ENCODE measurements at regions of chr5 and their contacts with region 1.

Region 1: GRCh38 chr5:91280362-91281269 is 102.5 kb downstream of the ARRDC3 start:
- DNase-seq: peak; percentile 95 to 97
- ATAC-seq: peak; percentile 97 to 99 (median 98)
- H3K4me3 ChIP-seq: peak overlapping the region; percentile 64
- H3K27ac ChIP-seq: peak overlapping the region; percentile 96
- H3K4me1 ChIP-seq: peaks cover 12% of the 10 kb centered on the region
- H3K27me3 ChIP-seq: no peaks in the 10 kb centered on the region
- CTCF ChIP-seq: no peak

Region 2: DNA sequence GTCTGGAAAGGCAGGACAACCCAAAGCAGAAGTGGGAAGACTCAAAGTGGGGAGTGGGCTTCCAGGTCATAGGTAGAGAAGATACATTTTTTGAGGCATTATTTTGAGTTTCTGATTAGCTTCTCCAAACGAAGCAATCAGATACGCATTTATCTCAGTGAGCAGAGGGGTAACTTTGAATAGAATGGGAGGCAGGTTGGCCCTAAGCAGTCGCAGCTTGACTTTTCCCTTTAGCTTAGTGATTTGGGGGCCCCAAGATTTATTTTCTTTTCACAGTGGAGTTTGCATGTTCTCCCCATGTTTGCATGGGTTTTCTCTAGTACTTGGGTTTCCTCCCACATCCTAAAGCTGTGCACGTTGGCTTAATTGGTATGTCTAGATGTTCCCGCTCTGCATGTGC is 299.4 kb before region 1 on chr5:
- intact Hi-C with region 1: no loop called
- DNase-seq: no peak
- ATAC-seq: no peak
- H3K4me3 ChIP-seq: no peak overlapping the region
- H3K27ac ChIP-seq: no peak overlapping the region
- H3K4me1 ChIP-seq: no peaks in the 10 kb centered on the region
- H3K27me3 ChIP-seq: no peaks in the 10 kb centered on the region
- CTCF ChIP-seq: no peak

Region 3: DNA sequence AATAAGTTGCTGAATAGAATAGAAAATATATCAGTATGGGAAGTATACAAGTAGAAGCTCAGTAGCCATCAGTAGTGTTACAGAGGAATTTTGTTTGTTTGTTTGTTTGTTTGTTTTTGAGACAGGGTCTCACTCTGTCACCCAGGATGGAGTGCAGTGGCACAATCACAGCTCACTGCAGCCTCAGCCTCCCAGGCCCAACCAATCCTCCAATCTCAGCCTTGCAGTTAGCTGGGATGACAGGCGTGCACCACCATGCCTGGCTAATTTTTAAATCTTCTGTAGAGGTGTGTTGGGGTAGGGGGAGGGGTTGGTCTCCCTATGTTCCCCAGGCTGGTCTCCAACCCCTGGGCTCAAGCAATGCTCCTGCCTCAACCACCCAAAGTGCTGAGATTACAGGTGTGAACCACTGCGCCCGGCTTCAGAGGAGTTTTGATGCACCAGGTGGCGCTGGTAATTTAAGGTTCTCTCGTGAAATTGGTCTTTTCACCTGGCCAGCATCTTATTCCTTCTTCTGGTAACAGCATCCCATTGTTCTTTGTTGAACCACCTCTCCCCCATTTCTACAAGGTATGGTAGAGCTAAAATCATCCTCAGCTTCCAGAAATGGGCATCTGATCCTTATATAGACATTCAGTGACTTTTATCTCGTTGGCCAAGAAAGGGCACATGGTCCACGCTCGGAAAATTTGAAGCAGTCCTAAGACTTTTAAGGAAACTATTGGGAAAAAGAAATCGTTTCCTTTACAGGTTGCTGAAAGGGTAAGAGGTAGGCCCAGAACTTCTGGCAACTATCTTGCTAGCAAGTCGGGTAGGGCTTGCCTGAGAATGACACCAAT is 54.5 kb before region 1 on chr5:
- intact Hi-C with region 1: loop called in 1 of 2 experiments (anchors 5 kb)
- DNase-seq: no peak
- ATAC-seq: peak; percentile 51 to 85 (median 68)
- H3K4me3 ChIP-seq: no peak overlapping the region
- H3K27ac ChIP-seq: no peak overlapping the region
- H3K4me1 ChIP-seq: no peaks in the 10 kb centered on the region
- H3K27me3 ChIP-seq: no peaks in the 10 kb centered on the region
- CTCF ChIP-seq: peak; percentile 48

Region 4: GRCh38 chr5:91311697-91312501 is 31.3 kb after region 1 on chr5:
- intact Hi-C with region 1: loop called in 1 of 2 experiments (anchors 2 kb)
- DNase-seq: peak; percentile 84 to 92
- ATAC-seq: peak; percentile 73 to 77 (median 75)
- H3K4me3 ChIP-seq: peak overlapping the region; percentile 59
- H3K27ac ChIP-seq: peak overlapping the region; percentile 97
- H3K4me1 ChIP-seq: peaks cover 44% of the 10 kb centered on the region
- H3K27me3 ChIP-seq: no peaks in the 10 kb centered on the region
- CTCF ChIP-seq: no peak